ENCODE measurements at regions of chr15 and their contacts with region 1.

Region 1: GRCh38 chr15:99719096-99719541 is 14.1 kb downstream of the LYSMD4 start:
- DNase-seq: no peak
- ATAC-seq: no peak
- H3K4me3 ChIP-seq: no peak overlapping the region
- H3K27ac ChIP-seq: no peak overlapping the region
- H3K4me1 ChIP-seq: peaks cover 15% of the 10 kb centered on the region
- H3K27me3 ChIP-seq: no peaks in the 10 kb centered on the region

Region 2: GRCh38 chr15:99755692-99756409 is 36.7 kb after region 1 on chr15:
- intact Hi-C with region 1: loop called in 1 of 4 experiments (anchors 2 kb)
- DNase-seq: peak; percentile 44 to 73 (median 71)
- ATAC-seq: peak; percentile 81 to 86
- H3K4me3 ChIP-seq: no peak overlapping the region
- H3K27ac ChIP-seq: no peak overlapping the region
- H3K4me1 ChIP-seq: no peaks in the 10 kb centered on the region
- H3K27me3 ChIP-seq: no peaks in the 10 kb centered on the region

Measured in right cardiac atrium (tissue), 5 donors.